Common myeloid progenitor, CD34-positive (primary cell): ENCODE measurements at regions of chr14 and their contacts with region 1.

Region 1: DNA sequence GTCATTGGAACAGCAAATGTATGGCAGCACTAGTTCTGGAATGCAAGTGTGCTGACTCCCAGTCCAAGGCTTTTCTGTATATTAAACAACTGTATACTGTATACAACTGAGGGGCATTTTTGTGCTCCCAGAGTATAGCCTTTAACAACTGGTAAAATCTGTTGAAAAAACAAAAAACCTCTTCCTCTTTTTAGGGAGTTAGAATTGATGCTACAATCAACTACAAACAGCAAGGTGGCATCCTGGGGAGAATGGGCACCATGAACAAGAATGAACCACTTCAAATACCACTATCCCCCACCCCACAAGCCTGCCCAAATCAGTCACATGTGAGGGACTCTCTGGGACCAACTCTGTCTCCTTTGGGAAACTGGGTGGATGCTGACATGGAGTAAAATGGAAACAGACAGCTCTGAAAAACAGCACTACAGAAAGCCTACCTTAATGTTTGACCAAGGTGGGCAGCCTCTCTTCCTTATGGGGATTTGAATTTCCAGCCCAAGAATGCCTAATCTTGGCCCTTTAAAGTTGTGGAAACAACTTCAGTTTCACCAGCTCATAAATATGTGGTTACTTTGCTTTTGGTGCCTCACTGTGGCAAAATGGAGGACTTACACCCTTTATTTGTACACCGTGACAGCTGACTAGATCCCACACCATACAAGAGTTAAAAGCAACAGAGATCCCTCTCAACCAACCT is 7.5 kb downstream of the VTI1B start:
- DNase-seq: peak; percentile 77 to 88 (median 82)
- H3K4me3 ChIP-seq: peak overlapping the region in 1 of 7 experiments; percentile 28
- H3K27ac ChIP-seq: peak overlapping the region; percentile 35 to 41
- H3K4me1 ChIP-seq: peaks cover 7 to 19% (median 11%) of the 10 kb centered on the region in 4 experiments
- H3K27me3 ChIP-seq: no peaks in the 10 kb centered on the region

Region 2: GRCh38 chr14:67599698-67600561 is 67.0 kb before region 1 on chr14 and contains the start of gene PIGH:
- CTCF ChIA-PET with region 1: interaction called, 10 read pairs
- POLR2A ChIA-PET with region 1: no interaction called
- DNase-seq: peak; percentile 90 to 94 (median 94)
- H3K4me3 ChIP-seq: peak within 1 kb of the TSS; percentile 41 to 97 (median 89)
- H3K27ac ChIP-seq: peak within 1 kb of the TSS; percentile 33 to 84
- H3K4me1 ChIP-seq: peaks cover 6 to 13% (median 10%) of the 10 kb centered on the region in 4 experiments
- H3K27me3 ChIP-seq: no peaks in the 10 kb centered on the region

Region 3: GRCh38 chr14:67619446-67620216 is 47.3 kb before region 1 on chr14 and contains the start of gene ARG2:
- CTCF ChIA-PET with region 1: interaction called, 23 read pairs
- POLR2A ChIA-PET with region 1: no interaction called
- DNase-seq: peak; percentile 92 to 95 (median 94)
- H3K4me3 ChIP-seq: peak within 1 kb of the TSS; percentile 60 to 91 (median 79)
- H3K27ac ChIP-seq: peak within 1 kb of the TSS; percentile 78 to 91
- H3K4me1 ChIP-seq: peaks cover 16 to 36% (median 26%) of the 10 kb centered on the region in 4 experiments
- H3K27me3 ChIP-seq: peaks cover 0 to 6% (median 2%) of the 10 kb centered on the region in 5 experiments

Region 4: DNA sequence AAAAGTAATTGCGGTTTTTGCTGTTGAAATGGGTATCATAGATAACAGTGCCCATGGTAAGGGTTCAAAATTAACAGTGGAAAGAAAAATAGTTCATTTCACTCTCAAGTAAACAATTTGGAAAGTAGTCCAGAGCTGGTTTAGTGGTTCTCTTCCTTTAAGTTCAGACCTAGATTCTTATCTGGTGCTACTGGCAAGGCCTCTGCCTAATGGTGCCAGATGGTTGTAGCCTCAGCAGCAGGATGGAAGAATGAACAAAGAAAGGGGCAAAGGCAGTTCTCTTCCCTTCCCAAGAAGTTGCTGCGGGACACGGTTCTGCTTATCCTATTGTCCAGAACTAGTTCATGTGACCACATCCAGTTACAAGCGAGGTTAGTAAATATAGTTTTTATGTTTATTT is 36.7 kb before region 1 on chr14:
- CTCF ChIA-PET with region 1: interaction called, 12 read pairs
- POLR2A ChIA-PET with region 1: no interaction called
- DNase-seq: no peak
- H3K4me3 ChIP-seq: no peak overlapping the region
- H3K27ac ChIP-seq: no peak overlapping the region
- H3K4me1 ChIP-seq: no peaks in the 10 kb centered on the region
- H3K27me3 ChIP-seq: no peaks in the 10 kb centered on the region

Region 5: DNA sequence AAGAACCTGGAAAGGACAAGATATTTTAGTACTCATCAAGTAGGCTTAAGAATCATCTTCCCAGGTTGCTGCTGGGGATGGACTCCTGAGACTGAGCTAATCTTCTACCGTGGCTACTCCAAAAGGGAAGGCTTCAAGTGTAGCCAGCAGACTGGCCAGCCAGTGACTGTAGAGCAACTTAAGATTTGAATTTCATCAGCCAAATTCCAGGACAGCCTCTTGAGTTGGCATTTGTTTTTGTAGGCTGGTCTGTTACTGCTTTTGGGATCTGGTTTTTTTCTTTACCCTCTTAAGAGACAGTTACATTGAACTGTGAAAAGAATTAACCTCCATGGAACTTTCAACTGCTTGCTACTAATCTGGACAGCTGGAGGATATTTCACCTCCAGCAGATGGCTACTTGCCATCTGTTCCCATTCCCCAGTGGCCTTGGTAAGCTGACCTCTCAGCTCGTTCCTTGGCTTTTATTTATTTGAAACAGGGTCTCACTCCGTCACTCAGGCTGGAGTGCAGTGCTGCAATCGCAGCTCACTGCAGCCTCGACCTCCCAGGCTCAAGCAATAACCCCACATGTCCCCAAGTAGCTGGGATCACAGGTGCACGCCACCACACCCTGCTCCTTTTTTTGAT is 13.1 kb before region 1 on chr14:
- CTCF ChIA-PET with region 1: interaction called, 11 read pairs
- POLR2A ChIA-PET with region 1: no interaction called
- DNase-seq: no peak
- H3K4me3 ChIP-seq: no peak overlapping the region
- H3K27ac ChIP-seq: no peak overlapping the region
- H3K4me1 ChIP-seq: no peaks in the 10 kb centered on the region
- H3K27me3 ChIP-seq: no peaks in the 10 kb centered on the region

Region 6: GRCh38 chr14:67704484-67705089 is 37.7 kb after region 1 on chr14:
- CTCF ChIA-PET with region 1: interaction called, 12 read pairs
- POLR2A ChIA-PET with region 1: interaction called, 3 read pairs
- DNase-seq: peak; percentile 78 to 90 (median 85)
- H3K4me3 ChIP-seq: no peak overlapping the region
- H3K27ac ChIP-seq: no peak overlapping the region
- H3K4me1 ChIP-seq: peaks cover 0 to 2% (median 0%) of the 10 kb centered on the region in 4 experiments
- H3K27me3 ChIP-seq: no peaks in the 10 kb centered on the region